Right ventricle myocardium inferior (tissue), 1 donor: ENCODE measurements at regions of chr3 and their contacts with region 1.

Region 1: DNA sequence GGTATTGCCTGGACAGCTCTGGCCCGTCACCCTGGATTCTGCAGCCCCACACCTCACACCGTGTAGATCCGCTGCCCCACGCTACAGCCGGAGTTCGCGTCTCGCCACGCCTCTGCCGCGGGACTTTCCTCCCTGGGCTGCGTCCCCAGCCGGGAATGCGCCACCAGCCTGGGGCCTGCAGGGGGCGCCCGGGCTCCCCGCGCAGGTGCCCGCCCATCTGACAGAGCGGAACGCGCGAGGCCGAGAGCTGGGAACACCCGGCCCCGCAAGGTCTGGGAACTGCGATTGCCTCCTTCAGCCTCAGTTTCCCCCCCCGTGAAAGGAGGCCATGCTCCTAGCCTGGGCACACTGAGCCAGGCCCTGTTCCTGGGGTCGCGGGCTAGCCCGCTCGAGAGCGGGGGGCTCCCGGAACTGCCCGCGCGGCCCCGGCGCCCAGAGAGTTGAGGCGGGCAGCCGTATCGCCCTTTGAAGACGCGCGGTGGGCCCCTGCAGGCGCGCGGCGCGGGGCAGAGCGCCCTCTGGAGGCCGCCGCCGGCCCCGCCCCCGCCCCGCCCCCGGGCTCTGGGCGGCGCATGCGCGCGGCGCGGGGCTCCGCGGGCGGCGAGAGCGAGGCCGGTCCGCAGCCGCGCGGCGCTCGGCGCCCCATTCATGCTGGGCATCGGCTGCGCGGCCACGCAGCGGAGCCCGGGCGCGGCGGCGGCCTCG is at the start of gene PLXNA1:
- DNase-seq: peak; percentile 90
- ATAC-seq: peak; percentile 83
- total RNA-seq, gene PLXNA1: 29.6 TPM

Region 2: GRCh38 chr3:126679318-126679751 is 303.3 kb before region 1 on chr3:
- intact Hi-C with region 1: loop called (anchors 5 kb)
- DNase-seq: peak; percentile 93
- ATAC-seq: peak; percentile 77

Region 3: GRCh38 chr3:126752303-126752842 is 230.2 kb before region 1 on chr3:
- intact Hi-C with region 1: loop called (anchors 1 kb)
- DNase-seq: peak; percentile 85
- ATAC-seq: peak; percentile 93

Region 4: GRCh38 chr3:126845920-126846715 is 136.5 kb before region 1 on chr3:
- intact Hi-C with region 1: no loop called
- DNase-seq: no peak
- ATAC-seq: no peak

Region 5: GRCh38 chr3:126961191-126961790 is 21.3 kb before region 1 on chr3:
- intact Hi-C with region 1: no loop called
- DNase-seq: peak; percentile 90
- ATAC-seq: peak; percentile 86

Region 6: DNA sequence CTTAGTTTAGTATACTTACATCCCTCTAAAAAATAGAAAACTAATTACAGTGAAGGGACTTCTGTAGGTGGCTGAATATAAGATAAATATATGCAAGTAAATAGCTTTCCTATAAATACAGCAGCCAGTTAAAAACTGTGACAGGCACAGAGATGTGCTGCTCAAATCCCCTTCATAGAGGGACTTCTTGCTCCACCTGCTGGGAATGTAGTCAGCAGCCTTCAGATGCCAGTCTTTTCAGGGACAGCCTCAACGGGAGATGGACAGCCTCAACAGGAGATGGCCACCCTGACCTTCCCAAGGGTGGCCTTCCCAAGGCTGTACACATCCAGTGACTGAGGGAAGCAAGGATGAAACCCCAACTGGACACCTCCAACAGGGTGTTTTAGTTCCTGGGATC is 194.6 kb after region 1 on chr3:
- intact Hi-C with region 1: loop called (anchors 5 kb)
- DNase-seq: no peak
- ATAC-seq: peak; percentile 28

Region 7: DNA sequence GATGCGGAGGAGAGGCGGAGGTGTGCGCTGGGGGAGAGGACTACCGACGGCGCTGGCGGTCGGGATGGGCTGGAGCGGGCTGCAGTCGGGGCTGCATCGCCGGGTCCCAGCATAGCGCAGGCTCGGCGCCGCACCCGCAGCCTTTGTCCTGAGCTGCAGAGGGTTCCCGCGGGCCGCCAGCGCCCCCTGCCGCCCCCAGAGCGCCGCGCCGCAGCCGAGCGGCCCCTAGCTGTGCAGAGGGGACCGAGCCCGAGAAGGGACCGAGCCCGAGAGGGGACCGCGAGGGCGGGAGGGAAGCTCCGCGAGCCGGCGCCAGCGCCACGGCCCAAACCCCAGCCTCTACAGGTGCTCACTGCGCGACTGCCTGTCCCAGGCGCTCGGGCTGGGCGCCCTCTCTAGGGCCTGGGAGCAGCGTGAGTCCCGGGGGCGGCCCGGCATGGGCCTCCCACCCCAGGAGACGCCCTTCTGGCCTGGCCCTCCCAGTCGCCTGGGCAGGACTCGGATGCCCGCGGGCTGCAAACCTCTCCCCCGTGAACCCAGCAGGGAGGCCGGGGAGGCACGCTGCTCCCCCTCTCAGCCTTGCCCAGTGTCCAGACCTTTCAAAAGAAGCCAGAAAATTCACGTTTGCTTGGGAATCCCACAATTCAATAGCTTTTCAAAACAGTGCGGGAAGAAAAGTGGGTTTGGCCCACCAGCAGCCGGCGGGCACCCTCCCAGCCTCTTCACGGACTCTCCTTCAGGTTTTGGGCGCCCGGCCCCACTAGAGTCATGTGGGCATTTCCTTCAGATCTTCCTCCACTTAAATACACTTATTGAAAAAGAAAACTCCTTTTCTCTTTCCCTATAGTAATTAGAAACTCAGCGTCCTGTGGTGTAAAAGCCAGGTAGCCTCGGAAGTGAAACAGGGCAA is 473.2 kb after region 1 on chr3:
- intact Hi-C with region 1: loop called (anchors 2 kb)
- DNase-seq: peak; percentile 80
- ATAC-seq: peak; percentile 90

Region 8: GRCh38 chr3:127544192-127544802 is 561.7 kb after region 1 on chr3:
- intact Hi-C with region 1: loop called (anchors 10 kb)
- DNase-seq: peak; percentile 79
- ATAC-seq: peak; percentile 33